ENCODE measurements at regions of chr1 and their contacts with region 1.

Region 1: GRCh38 chr1:208238710-208239472 is 5.3 kb downstream of the PLXNA2 start:
- DNase-seq: no peak
- H3K4me3 ChIP-seq: no peak overlapping the region
- H3K27ac ChIP-seq: no peak overlapping the region
- H3K4me1 ChIP-seq: peaks cover 0 to 4% of the 10 kb centered on the region in 2 donors
- H3K27me3 ChIP-seq: no peaks in the 10 kb centered on the region
- CTCF ChIP-seq: peak in 2 of 3 donors; percentile 38 to 42
- POLR2A ChIP-seq: no peak

Region 2: GRCh38 chr1:208036109-208036808 is 202.6 kb before region 1 on chr1:
- intact Hi-C with region 1: loop called (anchors 10 kb)
- DNase-seq: no peak
- H3K4me3 ChIP-seq: no peak overlapping the region
- H3K27ac ChIP-seq: no peak overlapping the region
- H3K4me1 ChIP-seq: no peaks in the 10 kb centered on the region
- H3K27me3 ChIP-seq: no peaks in the 10 kb centered on the region
- CTCF ChIP-seq: no peak
- POLR2A ChIP-seq: no peak

Region 3: GRCh38 chr1:208565761-208566440 is 327.0 kb after region 1 on chr1:
- intact Hi-C with region 1: no loop called
- DNase-seq: no peak
- H3K4me3 ChIP-seq: no peak overlapping the region
- H3K27ac ChIP-seq: no peak overlapping the region
- H3K4me1 ChIP-seq: no peaks in the 10 kb centered on the region
- H3K27me3 ChIP-seq: no peaks in the 10 kb centered on the region
- CTCF ChIP-seq: no peak
- POLR2A ChIP-seq: no peak

Region 4: GRCh38 chr1:209123601-209124000 is 884.7 kb after region 1 on chr1:
- intact Hi-C with region 1: no loop called
- DNase-seq: no peak
- H3K4me3 ChIP-seq: no peak overlapping the region
- H3K27ac ChIP-seq: no peak overlapping the region
- H3K4me1 ChIP-seq: no peaks in the 10 kb centered on the region
- H3K27me3 ChIP-seq: no peaks in the 10 kb centered on the region
- CTCF ChIP-seq: no peak
- POLR2A ChIP-seq: no peak